ENCODE measurements at regions of chr14 and their contacts with region 1.

Region 1: GRCh38 chr14:35046048-35046741 is at the start of gene FAM177A1:
- DNase-seq: peak; percentile 99
- ATAC-seq: peak; percentile 98 to 99
- total RNA-seq, gene FAM177A1: 40.4 to 88.2 TPM

Region 2: GRCh38 chr14:35121887-35122695 is 75.9 kb after region 1 on chr14 and contains the starts of genes PPP2R3C and PRORP:
- intact Hi-C with region 1: loop called in 1 of 2 experiments (anchors 2 kb)
- DNase-seq: peak; percentile 91
- ATAC-seq: peak; percentile 94 to 96
- total RNA-seq, gene PPP2R3C: 24.4 to 24.6 TPM
- total RNA-seq, gene PRORP: 17.1 to 20.0 TPM

Region 3: DNA sequence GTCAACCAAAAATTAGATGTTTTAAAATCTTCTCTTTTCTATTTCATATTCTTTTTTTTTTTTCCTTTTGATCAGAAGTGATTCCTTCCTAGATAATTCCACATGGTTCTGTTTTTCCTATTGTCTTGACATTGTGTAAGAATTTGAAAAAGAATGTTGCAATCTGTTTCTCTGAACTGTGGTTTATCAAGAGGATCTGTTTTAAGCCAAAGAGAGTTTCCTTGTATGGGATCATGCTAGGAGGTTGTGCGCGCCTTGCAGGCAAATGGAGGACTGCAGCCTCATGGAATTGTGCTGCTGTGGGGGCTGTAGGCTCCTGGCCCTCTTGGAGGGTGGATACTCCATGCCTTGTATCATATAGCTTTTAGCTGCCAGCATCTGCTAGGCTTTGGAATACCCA is 1317.5 kb after region 1 on chr14:
- intact Hi-C with region 1: no loop called
- DNase-seq: no peak
- ATAC-seq: no peak